ENCODE measurements at regions of chr20 and their contacts with region 1.

Region 1: DNA sequence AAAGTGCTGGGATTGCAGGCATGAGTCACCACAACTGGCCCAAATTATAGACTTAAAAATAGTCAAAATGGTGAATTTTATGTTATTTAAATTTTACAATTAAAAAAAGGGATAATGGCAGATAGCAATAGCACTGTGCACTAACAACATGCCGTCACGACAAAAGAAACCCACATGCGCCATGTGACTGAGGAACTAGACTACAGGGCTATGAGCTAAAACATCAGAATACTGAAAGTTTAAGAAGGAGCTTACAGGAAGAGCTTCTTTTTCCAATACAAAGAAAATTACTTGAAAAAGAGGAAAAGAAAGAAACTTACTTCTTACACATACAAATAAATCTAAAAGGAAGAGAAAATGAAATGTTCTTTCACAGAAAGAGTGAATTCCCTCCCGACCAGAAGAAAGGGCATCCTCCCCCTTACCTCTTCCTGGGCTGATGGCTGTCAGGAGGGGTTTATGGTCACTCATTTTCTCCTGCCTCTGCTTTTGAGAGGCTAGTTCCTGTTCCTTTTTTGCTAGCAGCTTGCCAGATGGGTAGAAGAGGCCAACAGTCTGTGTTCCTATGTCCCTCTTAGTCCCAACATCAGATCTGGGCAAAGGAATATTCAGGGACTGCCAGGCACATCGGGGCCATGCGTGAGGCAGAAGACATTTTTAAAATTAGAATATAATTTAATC is 54.5 kb downstream of the DZANK1 start:
- DNase-seq: peak; percentile 28
- ATAC-seq: peak; percentile 80
- H3K4me3 ChIP-seq: peak overlapping the region; percentile 41
- H3K27ac ChIP-seq: peak overlapping the region; percentile 82
- H3K4me1 ChIP-seq: peaks cover 9% of the 10 kb centered on the region
- H3K27me3 ChIP-seq: no peaks in the 10 kb centered on the region
- CTCF ChIP-seq: no peak
- EP300 ChIP-seq: no peak
- POLR2A ChIP-seq: no peak
- RAD21 ChIP-seq: no peak

Region 2: DNA sequence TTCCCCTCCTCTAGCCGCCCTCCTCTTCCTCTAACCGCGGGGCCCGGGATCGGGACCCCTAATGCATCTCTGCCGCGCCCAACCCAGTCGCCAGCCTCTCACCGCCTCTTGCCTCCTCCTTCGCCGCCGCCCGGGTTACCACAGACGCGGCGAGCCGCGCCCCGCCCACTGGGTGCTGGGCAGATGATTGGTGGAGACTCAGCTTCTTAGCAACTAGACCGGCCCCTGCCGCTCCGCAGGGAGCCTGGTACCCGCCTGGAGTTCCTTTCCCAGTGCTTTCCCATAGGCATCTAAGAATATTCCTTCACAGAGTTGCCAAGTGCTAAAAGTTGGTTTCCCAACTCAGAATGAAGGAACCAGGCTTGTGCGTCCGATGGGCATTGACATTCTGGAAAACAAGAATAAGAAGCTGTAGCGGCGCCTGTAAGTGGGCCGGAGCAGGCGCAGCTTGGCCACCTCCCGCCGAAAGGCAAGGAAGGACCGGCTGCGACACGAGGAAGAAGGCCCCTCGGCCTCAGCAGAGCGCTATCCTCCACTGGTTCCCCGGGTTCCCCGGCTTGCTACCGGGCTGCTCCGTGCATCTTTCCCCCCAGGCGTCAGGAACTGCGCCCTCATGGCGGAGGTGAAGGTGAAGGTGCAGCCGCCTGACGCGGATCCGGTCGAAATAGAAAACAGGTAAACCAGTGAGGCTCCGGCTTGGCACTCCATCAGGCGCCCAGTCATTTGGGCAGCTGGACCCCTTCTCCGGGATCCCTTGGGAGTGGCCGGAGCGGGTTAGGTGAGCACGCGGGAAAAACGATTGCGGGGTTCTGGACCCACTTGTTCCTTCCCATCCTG is 54.8 kb after region 1 on chr20 and contains the starts of genes DZANK1 and POLR3F:
- CTCF ChIA-PET with region 1: interaction called, 3 read pairs
- POLR2A ChIA-PET with region 1: interaction called, 3 read pairs
- RAD21 ChIA-PET with region 1: interaction called, 4 read pairs
- SMC1A ChIA-PET with region 1: interaction called, 15 read pairs
- in situ Hi-C with region 1: no loop called
- intact Hi-C with region 1: loop called (anchors 2 kb)
- DNase-seq: peak; percentile 75
- ATAC-seq: peak; percentile 100
- H3K4me3 ChIP-seq: peak within 1 kb of the TSS; percentile 93
- H3K27ac ChIP-seq: peak within 1 kb of the TSS; percentile 96
- H3K4me1 ChIP-seq: no peaks in the 10 kb centered on the region; the same call in 1 of the 2 replicates
- H3K27me3 ChIP-seq: no peaks in the 10 kb centered on the region
- CTCF ChIP-seq: no peak
- EP300 ChIP-seq: no peak
- POLR2A ChIP-seq: peak; percentile 86
- RAD21 ChIP-seq: no peak
- polyA plus RNA-seq, gene DZANK1: 6.1 to 7.6 TPM
- polyA plus RNA-seq, gene POLR3F: 9.5 to 12.4 TPM

Region 3: DNA sequence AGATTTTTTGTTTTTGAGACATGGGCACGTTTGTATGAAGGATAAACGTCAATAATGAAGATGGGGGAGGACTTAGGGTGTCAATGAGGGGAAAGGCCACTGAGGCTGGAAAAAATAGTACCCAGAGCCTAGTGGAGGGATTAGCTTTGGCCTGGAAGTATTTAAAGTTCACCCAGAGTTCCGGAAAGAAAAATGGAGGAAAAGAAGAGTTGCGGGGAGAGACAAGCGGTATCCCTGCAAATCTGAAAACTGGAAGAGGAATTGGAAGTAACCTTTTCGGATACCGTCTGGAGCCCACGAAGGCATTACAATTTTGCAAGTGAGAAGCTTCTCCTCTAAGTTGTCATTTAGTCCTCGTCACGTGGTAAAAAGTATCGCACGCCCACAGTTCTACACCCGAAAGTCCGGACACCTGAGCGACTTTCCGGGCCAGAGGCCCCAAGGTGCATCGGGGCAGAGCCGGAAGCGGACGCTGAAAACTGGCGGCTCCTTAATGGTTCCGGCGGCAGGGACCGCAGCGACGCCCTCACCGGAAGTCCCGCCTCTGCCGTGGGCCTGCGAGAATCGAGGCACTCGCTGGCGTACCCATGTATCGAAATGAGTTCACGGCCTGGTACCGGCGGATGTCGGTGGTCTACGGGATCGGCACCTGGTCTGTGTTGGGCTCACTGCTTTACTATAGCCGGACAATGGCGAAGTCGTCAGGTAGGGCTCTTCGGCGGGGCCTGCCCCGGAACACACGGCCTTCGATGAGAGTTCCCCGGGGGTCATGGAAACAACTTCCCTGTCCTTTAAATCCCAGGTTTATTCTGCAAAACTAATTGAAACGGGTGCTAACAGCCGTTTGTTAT is 154.8 kb after region 1 on chr20 and contains the start of gene SMIM26:
- CTCF ChIA-PET with region 1: no interaction called
- POLR2A ChIA-PET with region 1: no interaction called
- RAD21 ChIA-PET with region 1: no interaction called
- SMC1A ChIA-PET with region 1: no interaction called
- in situ Hi-C with region 1: no loop called
- intact Hi-C with region 1: loop called (anchors 2 kb)
- DNase-seq: peak; percentile 80
- ATAC-seq: peak; percentile 100
- H3K4me3 ChIP-seq: peak within 1 kb of the TSS; percentile 98
- H3K27ac ChIP-seq: peak within 1 kb of the TSS; percentile 78
- H3K4me1 ChIP-seq: peaks cover 4% of the 10 kb centered on the region; the same call in 1 of the 2 replicates
- H3K27me3 ChIP-seq: no peaks in the 10 kb centered on the region
- CTCF ChIP-seq: no peak
- EP300 ChIP-seq: no peak
- POLR2A ChIP-seq: peak; percentile 97
- RAD21 ChIP-seq: no peak
- polyA plus RNA-seq, gene SMIM26: 303 to 329 TPM

Region 4: DNA sequence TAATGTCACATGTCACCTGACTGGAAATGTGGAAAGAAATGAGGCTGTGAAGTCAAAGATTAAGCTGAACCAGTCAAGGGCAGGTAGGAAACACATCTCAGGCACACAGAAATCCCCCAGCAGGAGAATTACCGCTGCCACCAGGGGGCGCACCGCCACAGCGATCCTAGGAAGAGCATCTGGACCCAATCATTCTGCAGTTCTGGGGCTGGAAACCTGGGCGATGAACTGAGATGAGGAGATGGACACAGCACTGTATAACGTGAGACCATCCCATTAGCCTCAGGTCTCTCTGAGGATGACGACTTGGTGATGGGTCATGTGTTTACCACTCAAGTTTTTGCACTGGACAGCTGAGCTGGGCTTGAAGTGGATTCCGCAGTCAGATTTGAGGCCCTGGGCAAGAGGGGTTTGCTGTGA is 793.6 kb after region 1 on chr20:
- CTCF ChIA-PET with region 1: no interaction called
- POLR2A ChIA-PET with region 1: no interaction called
- RAD21 ChIA-PET with region 1: no interaction called
- SMC1A ChIA-PET with region 1: no interaction called
- in situ Hi-C with region 1: loop called (anchors 10 kb)
- intact Hi-C with region 1: no loop called
- DNase-seq: peak; percentile 8
- ATAC-seq: peak; percentile 90
- H3K4me3 ChIP-seq: no peak overlapping the region
- H3K27ac ChIP-seq: no peak overlapping the region
- H3K4me1 ChIP-seq: no peaks in the 10 kb centered on the region
- H3K27me3 ChIP-seq: no peaks in the 10 kb centered on the region; a peak in 3 of 4 replicates
- CTCF ChIP-seq: peak; percentile 82 to 85 (median 85)
- EP300 ChIP-seq: no peak
- POLR2A ChIP-seq: no peak
- RAD21 ChIP-seq: peak; percentile 80

Region 5: DNA sequence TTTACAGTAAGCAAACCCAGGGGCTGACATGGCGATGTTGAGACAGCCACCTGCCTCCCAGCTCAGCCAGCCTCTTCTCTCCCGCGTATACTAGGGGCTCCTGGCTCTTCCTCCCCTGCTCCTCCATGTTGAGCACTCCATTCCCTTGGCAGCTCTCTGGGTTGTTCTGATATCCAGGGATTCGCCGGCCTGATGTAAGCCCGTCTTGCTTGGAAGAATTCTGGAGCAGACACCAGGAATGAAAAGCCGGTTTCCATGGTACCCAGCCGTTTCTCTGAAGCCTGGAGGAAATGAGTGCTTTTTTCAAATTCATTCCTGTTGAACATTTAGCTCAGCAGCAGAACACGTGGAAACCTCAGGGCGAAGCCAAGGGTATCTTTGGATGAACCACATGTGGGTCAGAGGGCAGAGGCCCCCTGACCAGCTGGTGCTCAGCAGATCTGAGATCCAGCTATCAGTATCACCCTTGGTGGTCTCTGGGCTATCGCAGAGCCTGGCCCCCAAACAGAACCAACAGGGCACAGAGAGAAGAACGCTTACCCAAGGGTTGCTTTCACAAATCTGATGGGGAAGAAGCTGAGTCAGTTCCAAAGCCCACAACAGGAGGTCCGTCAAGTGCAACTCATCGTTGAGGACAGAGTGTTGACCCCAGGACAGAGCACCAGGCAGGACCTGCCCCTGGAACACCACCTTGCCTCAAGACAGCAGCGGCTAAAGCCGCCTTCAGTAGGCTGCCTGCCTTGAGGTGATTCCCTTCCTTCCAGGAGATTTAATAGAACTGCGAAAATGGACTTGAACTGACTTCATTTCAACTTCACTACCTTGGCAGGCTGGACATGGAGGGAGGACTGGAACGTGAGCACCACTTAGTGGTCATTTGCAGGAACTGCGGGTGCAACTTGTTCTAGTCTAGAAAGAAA is 1249.6 kb after region 1 on chr20:
- CTCF ChIA-PET with region 1: interaction called, 9 read pairs
- POLR2A ChIA-PET with region 1: no interaction called
- RAD21 ChIA-PET with region 1: no interaction called
- SMC1A ChIA-PET with region 1: interaction called, 5 read pairs
- in situ Hi-C with region 1: loop called (anchors 10 kb)
- intact Hi-C with region 1: loop called (anchors 5 kb)
- DNase-seq: no peak
- ATAC-seq: peak; percentile 72
- H3K4me3 ChIP-seq: no peak overlapping the region
- H3K27ac ChIP-seq: no peak overlapping the region
- H3K4me1 ChIP-seq: peaks cover 11% of the 10 kb centered on the region
- H3K27me3 ChIP-seq: no peaks in the 10 kb centered on the region
- CTCF ChIP-seq: peak; percentile 96 to 99 (median 99); a peak in 5 of 6 replicates
- EP300 ChIP-seq: no peak
- POLR2A ChIP-seq: no peak
- RAD21 ChIP-seq: peak; percentile 99